Posterior vena cava (tissue), 2 donors: ENCODE measurements at regions of chr3 and their contacts with region 1.

Region 1: DNA sequence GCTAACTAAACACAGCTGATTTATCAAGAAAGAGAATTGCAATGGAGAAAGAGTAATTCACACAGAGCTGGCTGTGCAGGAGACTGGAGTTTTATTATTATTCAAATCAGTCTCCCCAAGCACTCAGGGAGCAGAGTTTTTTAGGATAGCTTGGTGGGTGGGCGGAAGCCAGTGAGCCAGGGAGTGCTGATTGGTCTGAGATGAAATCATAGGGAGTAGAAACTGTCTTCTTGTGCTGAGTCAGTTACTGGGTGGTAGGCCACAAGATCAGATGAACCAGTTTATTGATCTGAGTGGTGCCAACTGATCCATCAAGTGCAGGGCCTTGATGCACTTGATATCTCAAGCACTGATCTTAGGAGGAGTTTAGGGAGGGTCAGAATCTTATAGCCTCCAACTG is 891.9 kb upstream of the CADM2 start:
- DNase-seq: no peak

Region 2: DNA sequence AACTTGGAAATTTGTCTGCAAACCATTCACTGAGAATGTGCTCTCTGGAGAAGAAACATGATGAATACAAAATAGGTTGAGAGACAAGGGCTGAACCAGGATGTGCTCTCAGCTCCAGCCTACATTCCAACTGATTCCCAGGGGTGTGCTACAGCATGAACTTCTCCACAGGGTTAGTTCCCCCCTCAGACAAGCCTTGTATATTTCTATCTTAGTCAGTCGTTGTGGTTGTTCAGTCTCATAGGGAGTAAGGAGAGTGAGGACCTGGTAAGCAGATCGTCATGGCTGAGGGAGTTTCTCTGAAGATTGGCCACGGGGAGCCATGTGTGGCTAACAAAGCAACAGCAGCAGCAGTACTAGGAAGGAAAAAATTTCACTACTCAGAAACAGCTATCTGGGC is 27.8 kb before region 1 on chr3:
- intact Hi-C with region 1: no loop called
- DNase-seq: no peak

Region 3: DNA sequence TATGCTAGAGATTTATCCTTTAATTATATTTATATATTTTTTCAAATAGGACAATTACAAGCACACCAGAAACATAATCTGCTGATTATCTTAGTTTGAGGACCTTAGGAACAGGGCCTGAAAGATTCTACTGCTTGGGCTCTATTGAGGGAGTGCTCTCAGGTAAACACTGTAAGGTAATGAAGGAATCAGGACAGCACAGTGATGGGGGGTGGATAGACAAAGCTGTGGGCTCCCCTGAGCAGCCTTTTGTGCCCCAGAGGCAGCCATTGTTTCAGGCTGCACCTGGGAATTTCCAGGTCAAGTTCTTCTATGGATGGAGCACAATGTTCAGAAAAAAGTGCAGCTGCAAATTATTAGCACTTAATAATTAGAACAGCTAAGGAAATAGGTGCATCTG is 43.9 kb after region 1 on chr3:
- intact Hi-C with region 1: no loop called
- DNase-seq: no peak

Region 4: GRCh38 chr3:85979034-85979433 is 1912.1 kb after region 1 on chr3:
- intact Hi-C with region 1: loop called in 1 of 2 experiments (anchors 10 kb)
- DNase-seq: no peak